MCF 10A (cell line): ENCODE measurements at regions of chr1 and their contacts with region 1.

Region 1: DNA sequence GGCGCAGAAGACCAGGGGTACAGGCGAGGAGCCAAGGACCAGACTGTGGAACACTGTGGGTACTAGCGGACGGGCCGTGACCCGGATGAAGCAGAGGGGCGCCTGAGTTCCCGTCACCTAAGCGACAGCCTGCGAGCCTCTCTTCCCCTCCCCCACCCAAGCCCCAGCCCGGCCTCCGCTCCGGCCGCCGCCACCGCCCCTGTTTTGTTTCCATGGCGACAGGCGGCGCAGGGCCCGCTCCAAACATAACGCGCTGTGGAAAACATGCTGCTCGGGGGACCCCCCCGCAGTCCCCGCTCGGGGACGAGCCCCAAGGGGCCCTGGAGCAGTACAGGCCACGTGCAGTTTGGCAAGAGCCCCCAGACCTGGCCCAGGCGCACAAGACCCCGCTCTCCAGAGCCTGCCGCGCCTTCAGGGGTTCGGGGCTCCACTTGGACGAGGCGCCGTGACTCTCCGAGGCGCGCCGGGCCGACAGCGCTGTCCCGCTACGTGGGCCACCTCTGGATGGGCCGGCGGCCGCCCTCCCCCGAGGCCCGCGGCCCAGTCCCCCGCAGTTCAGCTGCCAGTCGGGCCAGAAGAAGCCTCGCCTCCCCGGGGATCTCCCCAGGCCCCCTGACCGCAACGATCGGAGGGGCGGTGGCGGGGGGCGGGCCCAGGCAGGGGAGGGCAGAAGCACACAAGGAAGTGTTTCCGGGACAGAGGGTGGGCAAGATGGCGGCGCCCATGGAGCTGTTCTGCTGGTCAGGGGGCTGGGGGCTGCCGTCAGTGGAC is at the start of gene MTX1:
- DNase-seq: peak; percentile 79
- H3K4me3 Mint-ChIP-seq: peak within 1 kb of the TSS; percentile 76
- H3K27ac Mint-ChIP-seq: peak within 1 kb of the TSS; percentile 91
- H3K4me1 Mint-ChIP-seq: peaks cover 22% of the 10 kb centered on the region
- H3K27me3 Mint-ChIP-seq: no peaks in the 10 kb centered on the region
- CTCF ChIP-seq: no peak
- total RNA-seq, gene MTX1: 64.6 and 67.4 TPM in 2 replicates

Region 2: GRCh38 chr1:155105604-155106022 is 103.1 kb before region 1 on chr1:
- CTCF ChIA-PET with region 1: no interaction called
- POLR2A ChIA-PET with region 1: no interaction called
- intact Hi-C with region 1: no loop called
- DNase-seq: peak; percentile 26
- H3K4me3 Mint-ChIP-seq: no peak overlapping the region
- H3K27ac Mint-ChIP-seq: peak overlapping the region; percentile 4
- H3K4me1 Mint-ChIP-seq: peaks cover 18% of the 10 kb centered on the region
- H3K27me3 Mint-ChIP-seq: no peaks in the 10 kb centered on the region
- CTCF ChIP-seq: no peak

Region 3: DNA sequence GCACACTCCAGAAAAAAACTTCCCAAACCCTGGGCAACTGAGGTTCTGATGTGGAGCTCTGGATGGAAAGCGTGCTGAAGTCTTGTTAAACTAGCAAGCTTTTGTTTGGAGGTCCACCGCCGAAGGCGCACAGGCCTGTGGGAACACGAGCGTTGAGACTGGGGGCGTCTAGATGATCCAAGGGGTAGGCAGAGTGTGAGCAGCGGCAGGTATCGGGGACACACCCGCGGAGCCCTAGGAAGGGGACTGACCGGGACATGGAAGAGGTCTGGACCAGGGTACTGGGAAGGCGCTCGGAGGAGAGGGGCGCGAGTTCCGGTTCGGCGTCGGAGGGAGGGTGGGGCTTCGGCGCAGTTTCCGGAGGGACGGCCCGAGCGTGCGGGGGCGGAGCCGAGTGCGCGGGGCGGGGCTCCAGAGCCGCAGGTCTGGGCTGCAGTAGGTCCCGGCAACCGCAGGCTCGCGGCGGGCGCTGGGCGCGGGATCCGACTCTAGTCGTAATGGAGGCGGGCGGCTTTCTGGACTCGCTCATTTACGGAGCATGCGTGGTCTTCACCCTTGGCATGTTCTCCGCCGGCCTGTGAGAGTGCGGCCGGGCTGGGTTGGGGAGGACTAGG is 73.2 kb before region 1 on chr1 and contains the start of gene SLC50A1:
- CTCF ChIA-PET with region 1: interaction called, 3 read pairs
- POLR2A ChIA-PET with region 1: interaction called, 11 read pairs
- intact Hi-C with region 1: no loop called
- DNase-seq: peak; percentile 94
- H3K4me3 Mint-ChIP-seq: peak within 1 kb of the TSS; percentile 80
- H3K27ac Mint-ChIP-seq: peak within 1 kb of the TSS; percentile 94
- H3K4me1 Mint-ChIP-seq: peaks cover 50% of the 10 kb centered on the region
- H3K27me3 Mint-ChIP-seq: no peaks in the 10 kb centered on the region
- CTCF ChIP-seq: no peak
- total RNA-seq, gene SLC50A1: 91.2 and 97.8 TPM in 2 replicates

Region 4: DNA sequence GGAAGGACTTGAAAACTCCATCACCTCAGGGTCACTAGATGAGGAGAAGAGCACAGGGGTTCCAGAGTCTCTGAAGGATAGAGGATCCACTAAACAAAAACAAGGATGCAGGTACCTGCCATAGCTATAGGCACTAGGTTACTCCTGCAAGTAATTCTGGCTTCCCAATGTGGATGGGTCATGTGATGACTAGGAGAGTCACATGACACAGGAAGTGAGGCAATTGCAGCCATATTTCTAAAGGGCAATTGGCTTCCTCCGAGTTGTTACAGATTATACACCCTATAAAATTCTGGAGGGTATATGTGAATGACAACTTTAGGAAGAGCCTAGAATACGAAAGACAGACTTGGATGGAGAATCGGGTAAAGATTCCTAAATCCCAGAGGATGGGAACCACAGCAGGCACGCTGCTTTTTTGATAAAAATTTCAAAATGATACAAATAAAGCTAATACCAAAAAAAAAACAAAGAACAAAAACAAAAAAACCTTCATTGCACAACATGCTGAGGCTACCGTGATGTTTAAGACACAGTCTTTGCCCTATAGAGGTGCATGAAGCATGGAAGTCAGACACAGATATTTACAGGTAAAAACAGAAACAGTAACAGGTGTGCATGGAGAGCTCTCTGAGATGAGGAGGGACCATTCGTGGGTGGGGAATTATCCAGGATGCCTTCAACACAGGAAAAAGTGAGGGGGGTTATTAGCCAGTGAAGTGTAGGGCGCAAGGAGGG is 10.3 kb after region 1 on chr1:
- CTCF ChIA-PET with region 1: interaction called, 78 read pairs
- POLR2A ChIA-PET with region 1: interaction called, 66 read pairs
- intact Hi-C with region 1: no loop called
- DNase-seq: peak; percentile 83
- H3K4me3 Mint-ChIP-seq: peak overlapping the region; percentile 62
- H3K27ac Mint-ChIP-seq: peak overlapping the region; percentile 93
- H3K4me1 Mint-ChIP-seq: peaks cover 20% of the 10 kb centered on the region
- H3K27me3 Mint-ChIP-seq: no peaks in the 10 kb centered on the region
- CTCF ChIP-seq: no peak

Region 5: GRCh38 chr1:155227261-155228095 is 18.8 kb after region 1 on chr1:
- CTCF ChIA-PET with region 1: interaction called, 78 read pairs
- POLR2A ChIA-PET with region 1: interaction called, 66 read pairs
- intact Hi-C with region 1: loop called (anchors 1 kb)
- DNase-seq: peak; percentile 100
- H3K4me3 Mint-ChIP-seq: peak overlapping the region; percentile 85
- H3K27ac Mint-ChIP-seq: peak overlapping the region; percentile 89
- H3K4me1 Mint-ChIP-seq: peaks cover 34% of the 10 kb centered on the region
- H3K27me3 Mint-ChIP-seq: no peaks in the 10 kb centered on the region
- CTCF ChIP-seq: no peak

Region 6: DNA sequence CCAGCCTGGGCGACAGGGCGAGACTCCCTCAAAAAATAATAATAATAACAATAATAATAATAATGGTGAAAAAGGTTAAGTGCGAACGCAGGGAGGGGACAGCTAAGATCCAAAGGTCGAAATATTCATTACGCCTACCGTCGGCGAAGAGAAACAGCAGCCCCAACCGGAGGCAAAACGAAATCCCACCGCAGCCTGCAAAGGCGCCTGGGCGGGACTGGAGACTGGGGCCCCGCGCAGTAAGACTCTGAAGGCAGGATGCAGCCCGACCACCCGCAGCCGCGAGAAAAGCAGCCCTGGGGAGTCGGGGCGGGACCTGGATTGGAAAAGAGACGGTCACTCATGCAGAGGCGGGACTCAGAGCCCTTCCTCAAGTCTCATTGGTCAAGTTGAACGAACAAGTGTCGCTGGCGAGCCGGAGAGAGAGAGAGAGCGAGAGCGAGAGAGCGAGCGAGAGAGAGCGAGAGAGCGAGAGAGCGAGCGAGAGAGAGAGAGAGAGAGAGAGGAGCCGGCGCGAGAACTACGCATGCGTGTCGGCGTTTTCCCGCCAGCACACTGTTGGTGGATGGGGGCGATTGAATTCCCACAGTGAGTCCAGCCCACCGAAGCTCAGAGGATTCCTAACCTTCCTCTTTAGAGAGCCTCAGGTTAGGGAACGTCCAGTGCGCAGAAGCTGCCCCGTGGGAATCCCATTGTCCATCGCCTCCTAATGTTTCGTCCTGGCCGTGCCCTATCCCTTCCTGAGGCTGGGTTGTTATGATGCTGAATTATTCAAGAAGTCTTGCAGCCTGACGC is 35.8 kb after region 1 on chr1:
- CTCF ChIA-PET with region 1: interaction called, 55 read pairs
- POLR2A ChIA-PET with region 1: interaction called, 12 read pairs
- intact Hi-C with region 1: loop called (anchors 1 kb)
- DNase-seq: peak; percentile 100
- H3K4me3 Mint-ChIP-seq: peak overlapping the region; percentile 70
- H3K27ac Mint-ChIP-seq: peak overlapping the region; percentile 29
- H3K4me1 Mint-ChIP-seq: peaks cover 24% of the 10 kb centered on the region
- H3K27me3 Mint-ChIP-seq: no peaks in the 10 kb centered on the region
- CTCF ChIP-seq: peak; percentile 38

Region 7: DNA sequence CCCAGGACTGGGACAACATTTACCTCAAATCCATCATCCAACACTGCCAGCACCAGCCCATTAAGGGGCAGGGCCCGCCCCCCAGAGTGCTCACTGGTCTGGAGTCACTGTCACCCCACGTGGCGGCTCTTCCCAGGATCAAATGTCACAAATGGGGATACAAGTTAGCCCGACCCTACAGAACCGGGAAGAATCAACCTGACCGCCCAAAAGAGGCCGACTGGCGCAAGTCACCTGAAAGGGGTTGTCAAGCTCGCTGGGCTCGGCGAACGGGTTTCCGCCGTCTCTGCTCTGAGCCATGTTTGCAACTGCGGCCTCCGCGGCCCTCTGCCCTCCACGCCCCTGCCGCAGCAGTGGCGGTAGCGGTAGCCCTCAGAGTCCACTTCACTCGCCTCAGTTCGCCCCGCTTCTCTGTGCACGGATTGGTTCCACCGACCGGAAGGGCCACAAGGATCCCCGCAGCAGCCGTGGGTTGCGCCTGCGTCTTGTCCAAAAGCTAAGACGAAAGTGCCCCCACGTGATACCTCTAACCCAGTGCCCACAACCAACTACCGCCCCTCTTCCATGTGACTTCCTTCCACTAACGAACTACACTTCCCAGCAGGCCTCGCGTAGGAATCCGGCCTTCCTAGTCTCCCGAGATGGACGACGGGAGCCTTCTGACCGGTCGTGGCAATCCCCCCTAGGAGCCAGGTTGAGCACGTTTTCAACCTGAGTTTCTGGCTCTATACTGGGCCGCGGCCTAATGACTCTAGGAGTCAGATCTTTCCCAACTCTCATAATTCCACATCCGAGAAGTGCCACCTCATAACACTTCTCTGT is 53.3 kb after region 1 on chr1 and contains the start of gene SCAMP3:
- CTCF ChIA-PET with region 1: interaction called, 3 read pairs
- POLR2A ChIA-PET with region 1: interaction called, 3 read pairs
- intact Hi-C with region 1: loop called (anchors 5 kb)
- DNase-seq: peak; percentile 100
- H3K4me3 Mint-ChIP-seq: peak within 1 kb of the TSS; percentile 98
- H3K27ac Mint-ChIP-seq: peak within 1 kb of the TSS; percentile 96
- H3K4me1 Mint-ChIP-seq: peaks cover 18% of the 10 kb centered on the region
- H3K27me3 Mint-ChIP-seq: no peaks in the 10 kb centered on the region
- CTCF ChIP-seq: no peak
- total RNA-seq, gene SCAMP3: 80.6 and 88.1 TPM in 2 replicates

Region 8: GRCh38 chr1:155562581-155563376 is 354.1 kb after region 1 on chr1 and contains the start of gene ASH1L:
- CTCF ChIA-PET with region 1: no interaction called
- POLR2A ChIA-PET with region 1: no interaction called
- intact Hi-C with region 1: no loop called
- DNase-seq: peak; percentile 97
- H3K4me3 Mint-ChIP-seq: peak within 1 kb of the TSS; percentile 95
- H3K27ac Mint-ChIP-seq: peak within 1 kb of the TSS; percentile 97
- H3K4me1 Mint-ChIP-seq: peaks cover 19% of the 10 kb centered on the region
- H3K27me3 Mint-ChIP-seq: no peaks in the 10 kb centered on the region
- CTCF ChIP-seq: no peak
- total RNA-seq, gene ASH1L: 59.1 and 66.8 TPM in 2 replicates

Region 9: DNA sequence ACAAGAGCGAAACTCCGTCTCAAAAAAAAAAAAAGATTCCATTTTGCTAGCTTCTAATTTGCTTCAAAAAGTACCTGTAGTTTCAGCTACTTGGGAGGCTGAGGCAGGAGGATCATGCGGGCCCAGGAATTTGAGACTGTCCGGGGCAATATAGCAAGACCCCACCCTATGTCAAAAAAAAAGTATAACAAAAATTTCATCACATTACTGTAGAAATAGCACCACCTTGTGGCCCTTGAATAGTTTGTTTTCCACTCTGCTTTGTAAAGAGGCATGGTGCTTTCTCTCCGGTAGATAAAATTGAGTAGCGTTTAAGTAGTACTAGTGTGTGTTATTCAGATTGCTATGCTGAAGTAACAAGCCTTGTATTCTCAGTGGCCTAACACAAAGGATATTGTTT is 383.0 kb after region 1 on chr1:
- CTCF ChIA-PET with region 1: interaction called, 13 read pairs
- POLR2A ChIA-PET with region 1: interaction called, 3 read pairs
- intact Hi-C with region 1: no loop called
- DNase-seq: peak; percentile 78
- H3K4me3 Mint-ChIP-seq: no peak overlapping the region
- H3K27ac Mint-ChIP-seq: no peak overlapping the region
- H3K4me1 Mint-ChIP-seq: no peaks in the 10 kb centered on the region
- H3K27me3 Mint-ChIP-seq: no peaks in the 10 kb centered on the region
- CTCF ChIP-seq: peak; percentile 80